Naive thymus-derived CD4-positive, alpha-beta T cell (primary cell): ENCODE measurements at regions of chr1 and their contacts with region 1.

Region 1: DNA sequence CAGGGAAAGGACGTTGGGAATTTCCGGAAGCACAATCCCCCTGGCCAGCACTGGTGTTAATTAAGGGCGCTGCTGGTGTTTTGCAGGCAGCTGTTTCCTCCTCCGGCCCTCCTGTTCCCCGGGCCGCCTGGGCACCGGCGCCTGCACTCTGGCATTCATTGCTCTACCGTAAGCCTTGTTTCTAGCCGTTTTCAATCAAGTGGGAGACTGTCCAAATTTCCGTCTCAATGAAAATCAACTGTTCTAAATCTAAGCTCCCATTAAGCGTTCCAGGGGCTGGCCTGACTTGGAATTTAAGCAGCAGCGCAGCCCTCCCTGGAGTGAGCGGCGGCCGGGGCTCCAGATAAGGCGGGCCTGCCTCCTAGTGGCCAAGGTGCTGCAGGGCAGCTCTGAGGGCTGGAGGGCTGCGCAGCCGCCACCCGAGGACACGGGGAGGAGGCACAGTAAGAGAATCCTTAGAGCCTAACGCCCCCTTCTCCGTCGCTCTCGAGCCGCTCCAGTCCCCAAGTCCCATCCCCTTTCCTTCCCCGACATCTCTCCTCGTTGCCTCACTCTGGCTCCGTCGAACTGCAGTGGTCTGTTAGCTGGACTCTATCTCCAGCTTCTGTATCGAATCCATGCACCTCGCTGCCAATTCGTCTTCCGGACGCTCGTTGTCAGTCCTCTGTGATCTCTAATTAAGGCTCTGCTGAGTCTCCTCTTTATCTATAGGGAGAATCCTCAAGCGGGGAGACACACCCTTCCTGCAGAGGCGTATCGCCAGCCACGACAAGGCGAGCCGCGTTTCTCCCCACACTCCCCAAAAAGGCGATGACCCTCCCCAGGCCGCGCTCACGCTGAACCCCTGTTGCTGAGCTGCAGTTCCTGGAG is 57.8 kb upstream of the LRRC8D start:
- DNase-seq: peak; percentile 76 to 88 (median 84)
- ATAC-seq: peak; percentile 100
- H3K4me3 ChIP-seq: peak overlapping the region; percentile 59
- H3K4me3 Mint-ChIP-seq: peak overlapping the region; percentile 76 to 96 (median 91)
- H3K27ac ChIP-seq: peak overlapping the region; percentile 50
- H3K27ac Mint-ChIP-seq: peak overlapping the region; percentile 76 to 95 (median 89)
- H3K4me1 ChIP-seq: peaks cover 18 to 37% of the 10 kb centered on the region in 2 donors
- H3K4me1 Mint-ChIP-seq: peaks cover 34 to 57% (median 55%) of the 10 kb centered on the region in 7 donors
- H3K27me3 ChIP-seq: no peaks in the 10 kb centered on the region
- H3K27me3 Mint-ChIP-seq: peaks cover 0 to 4% (median 0%) of the 10 kb centered on the region in 5 donors

Region 2: GRCh38 chr1:89581859-89582258 is 181.2 kb before region 1 on chr1:
- CTCF ChIA-PET with region 1: interaction called, 60 read pairs
- POLR2A ChIA-PET with region 1: interaction called, 13 read pairs
- intact Hi-C with region 1: loop called in 1 of 2 experiments (anchors 1 kb)
- DNase-seq: no peak
- ATAC-seq: no peak
- H3K4me3 ChIP-seq: no peak overlapping the region
- H3K4me3 Mint-ChIP-seq: no peak overlapping the region
- H3K27ac ChIP-seq: no peak overlapping the region
- H3K27ac Mint-ChIP-seq: peak overlapping the region in 4 of 9 donors; percentile 5 to 61 (median 48)
- H3K4me1 ChIP-seq: no peaks in the 10 kb centered on the region
- H3K4me1 Mint-ChIP-seq: peaks cover 6 to 42% (median 27%) of the 10 kb centered on the region in 7 donors
- H3K27me3 ChIP-seq: no peaks in the 10 kb centered on the region
- H3K27me3 Mint-ChIP-seq: no peaks in the 10 kb centered on the region

Region 3: GRCh38 chr1:89615676-89616598 is 147.1 kb before region 1 on chr1:
- CTCF ChIA-PET with region 1: interaction called, 34 read pairs
- POLR2A ChIA-PET with region 1: interaction called, 81 read pairs
- intact Hi-C with region 1: no loop called
- DNase-seq: no peak
- ATAC-seq: peak; percentile 54
- H3K4me3 ChIP-seq: no peak overlapping the region
- H3K4me3 Mint-ChIP-seq: peak overlapping the region in 2 of 10 donors; percentile 23 to 24
- H3K27ac ChIP-seq: no peak overlapping the region
- H3K27ac Mint-ChIP-seq: peak overlapping the region in 8 of 9 donors; percentile 15 to 86 (median 74)
- H3K4me1 ChIP-seq: peaks cover 30 to 42% of the 10 kb centered on the region in 2 donors
- H3K4me1 Mint-ChIP-seq: peaks cover 38 to 95% (median 84%) of the 10 kb centered on the region in 7 donors
- H3K27me3 ChIP-seq: no peaks in the 10 kb centered on the region
- H3K27me3 Mint-ChIP-seq: no peaks in the 10 kb centered on the region

Region 4: DNA sequence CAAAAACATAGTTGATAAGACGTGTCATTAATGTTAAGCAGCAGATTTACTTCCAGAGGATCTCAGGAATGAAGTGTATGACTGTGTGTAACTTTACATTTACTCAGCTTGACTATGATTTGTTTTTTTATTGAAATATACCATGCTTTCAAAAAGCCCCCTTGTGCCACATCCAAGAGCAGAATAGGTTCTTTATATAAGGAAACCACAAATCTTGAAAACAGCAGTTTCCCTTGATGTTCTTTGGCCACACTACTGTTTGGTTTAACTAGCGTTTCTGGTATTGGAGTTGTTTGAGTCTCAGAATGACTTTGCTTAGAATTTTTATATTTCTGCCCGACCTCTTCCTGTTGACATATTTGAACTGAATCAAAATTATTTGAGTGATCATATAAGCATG is 105.1 kb before region 1 on chr1:
- CTCF ChIA-PET with region 1: interaction called, 13 read pairs
- POLR2A ChIA-PET with region 1: interaction called, 3 read pairs
- intact Hi-C with region 1: loop called (anchors 1 kb)
- DNase-seq: peak in 7 of 9 donors; percentile 46 to 80 (median 68)
- ATAC-seq: peak; percentile 86
- H3K4me3 ChIP-seq: peak overlapping the region; percentile 18
- H3K4me3 Mint-ChIP-seq: peak overlapping the region; percentile 36 to 78 (median 66)
- H3K27ac ChIP-seq: peak overlapping the region; percentile 50
- H3K27ac Mint-ChIP-seq: peak overlapping the region; percentile 79 to 91 (median 84)
- H3K4me1 ChIP-seq: peaks cover 65 to 94% of the 10 kb centered on the region in 2 donors
- H3K4me1 Mint-ChIP-seq: peaks cover 47 to 94% (median 89%) of the 10 kb centered on the region in 7 donors
- H3K27me3 ChIP-seq: no peaks in the 10 kb centered on the region
- H3K27me3 Mint-ChIP-seq: no peaks in the 10 kb centered on the region

Region 5: DNA sequence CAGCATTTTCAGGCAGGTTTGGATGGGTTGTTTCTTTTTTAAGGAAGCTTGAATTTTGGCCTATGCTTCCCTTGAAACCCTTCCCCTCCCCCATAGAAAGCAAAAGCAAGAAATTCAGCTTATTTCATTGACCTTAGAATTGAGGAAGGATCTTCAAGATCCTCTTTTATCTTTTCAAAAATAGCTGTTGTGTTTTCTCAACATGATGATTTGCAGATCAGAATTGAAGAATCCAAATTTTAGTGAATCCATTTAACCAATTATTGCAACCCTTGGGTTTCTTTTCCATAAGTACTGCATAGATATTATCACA is 56.4 kb before region 1 on chr1:
- CTCF ChIA-PET with region 1: interaction called, 10 read pairs
- POLR2A ChIA-PET with region 1: interaction called, 3 read pairs
- intact Hi-C with region 1: no loop called
- DNase-seq: no peak
- ATAC-seq: no peak
- H3K4me3 ChIP-seq: no peak overlapping the region
- H3K4me3 Mint-ChIP-seq: no peak overlapping the region
- H3K27ac ChIP-seq: no peak overlapping the region
- H3K27ac Mint-ChIP-seq: peak overlapping the region in 5 of 9 donors; percentile 2 to 82 (median 32)
- H3K4me1 ChIP-seq: peaks cover 4 to 5% of the 10 kb centered on the region in 2 donors
- H3K4me1 Mint-ChIP-seq: peaks cover 22 to 57% (median 40%) of the 10 kb centered on the region in 7 donors
- H3K27me3 ChIP-seq: no peaks in the 10 kb centered on the region
- H3K27me3 Mint-ChIP-seq: no peaks in the 10 kb centered on the region

Region 6: DNA sequence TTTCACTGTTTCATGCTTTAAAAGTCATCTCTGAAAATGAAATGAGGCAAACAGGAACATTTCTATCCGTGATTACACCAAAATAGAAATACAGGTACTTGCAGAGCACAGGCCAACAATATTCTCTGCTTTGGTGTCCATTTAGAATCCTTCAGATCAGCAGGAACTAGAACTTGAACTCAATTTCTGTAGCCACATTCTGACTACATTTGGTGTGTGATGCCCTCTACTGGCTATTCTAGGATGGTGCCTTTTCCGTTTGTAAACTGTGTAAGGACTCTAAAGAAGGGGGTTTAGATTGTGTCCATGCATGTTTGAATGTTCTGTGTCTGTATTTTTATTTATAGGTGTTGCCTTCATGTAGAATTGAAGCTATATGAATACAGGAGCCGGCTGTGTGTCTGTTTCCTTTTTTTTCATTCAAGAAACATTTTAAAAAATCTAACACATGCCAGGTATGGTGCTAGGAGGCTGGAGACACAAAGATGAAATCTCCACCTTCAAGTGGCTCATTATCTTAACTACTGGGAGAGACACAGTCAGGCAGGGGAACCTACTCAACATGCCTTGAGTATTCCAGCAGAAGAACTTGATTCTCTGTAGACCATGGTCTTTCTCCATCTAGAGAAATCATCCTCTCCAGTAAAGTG is 224.3 kb after region 1 on chr1:
- CTCF ChIA-PET with region 1: interaction called, 3 read pairs
- POLR2A ChIA-PET with region 1: no interaction called
- intact Hi-C with region 1: loop called in 1 of 2 experiments (anchors 1 kb)
- DNase-seq: peak in 8 of 9 donors; percentile 48 to 76 (median 70)
- ATAC-seq: peak; percentile 97
- H3K4me3 ChIP-seq: no peak overlapping the region
- H3K4me3 Mint-ChIP-seq: no peak overlapping the region
- H3K27ac ChIP-seq: no peak overlapping the region
- H3K27ac Mint-ChIP-seq: no peak overlapping the region
- H3K4me1 ChIP-seq: no peaks in the 10 kb centered on the region
- H3K4me1 Mint-ChIP-seq: no peaks in the 10 kb centered on the region
- H3K27me3 ChIP-seq: no peaks in the 10 kb centered on the region
- H3K27me3 Mint-ChIP-seq: peaks cover 0 to 13% (median 4%) of the 10 kb centered on the region in 5 donors